ENCODE measurements at regions of chr1 and their contacts with region 1.

Region 1: DNA sequence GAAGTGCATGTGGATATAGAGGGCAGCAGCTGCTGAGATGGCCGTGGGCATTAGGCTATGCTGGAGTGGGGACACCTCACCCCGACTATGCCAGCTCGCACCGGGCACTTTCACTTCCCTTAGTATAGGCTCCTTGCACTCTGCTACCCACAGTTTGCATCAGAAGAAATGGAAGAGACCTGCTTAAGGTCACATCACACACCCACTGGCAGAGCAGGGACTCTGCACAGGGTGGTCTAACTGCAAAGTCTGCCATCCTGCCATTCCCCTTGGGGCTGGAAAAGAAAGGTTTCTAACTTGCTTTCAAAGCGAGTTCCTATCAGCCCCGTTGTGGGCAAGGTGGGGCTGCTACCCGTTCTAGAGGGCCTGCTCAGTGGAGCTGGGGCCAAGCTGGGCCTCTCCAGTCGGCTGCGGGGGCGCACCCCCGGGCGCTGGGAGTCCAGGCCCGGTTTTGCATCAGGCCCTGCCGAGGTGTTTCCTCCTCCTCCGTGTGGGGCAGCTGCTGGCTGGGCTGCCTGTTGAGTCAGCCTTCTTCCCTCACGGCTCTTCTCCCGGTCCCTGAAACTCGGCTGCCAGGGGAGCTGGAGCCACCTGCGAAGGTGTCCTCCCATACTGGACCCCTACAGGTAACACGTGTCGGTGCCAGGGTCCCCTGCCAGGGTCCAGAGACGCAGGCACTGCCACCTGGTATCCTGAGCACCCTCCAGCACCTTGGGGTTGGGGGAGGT is at the start of gene SYTL1:
- DNase-seq: peak; percentile 68 to 88 (median 82)
- H3K4me3 ChIP-seq: peak within 1 kb of the TSS; percentile 56 to 93 (median 83)
- H3K27ac ChIP-seq: peak within 1 kb of the TSS; percentile 50 to 84
- H3K4me1 ChIP-seq: peaks cover 3 to 56% (median 36%) of the 10 kb centered on the region in 4 experiments
- H3K27me3 ChIP-seq: no peaks in the 10 kb centered on the region

Region 2: DNA sequence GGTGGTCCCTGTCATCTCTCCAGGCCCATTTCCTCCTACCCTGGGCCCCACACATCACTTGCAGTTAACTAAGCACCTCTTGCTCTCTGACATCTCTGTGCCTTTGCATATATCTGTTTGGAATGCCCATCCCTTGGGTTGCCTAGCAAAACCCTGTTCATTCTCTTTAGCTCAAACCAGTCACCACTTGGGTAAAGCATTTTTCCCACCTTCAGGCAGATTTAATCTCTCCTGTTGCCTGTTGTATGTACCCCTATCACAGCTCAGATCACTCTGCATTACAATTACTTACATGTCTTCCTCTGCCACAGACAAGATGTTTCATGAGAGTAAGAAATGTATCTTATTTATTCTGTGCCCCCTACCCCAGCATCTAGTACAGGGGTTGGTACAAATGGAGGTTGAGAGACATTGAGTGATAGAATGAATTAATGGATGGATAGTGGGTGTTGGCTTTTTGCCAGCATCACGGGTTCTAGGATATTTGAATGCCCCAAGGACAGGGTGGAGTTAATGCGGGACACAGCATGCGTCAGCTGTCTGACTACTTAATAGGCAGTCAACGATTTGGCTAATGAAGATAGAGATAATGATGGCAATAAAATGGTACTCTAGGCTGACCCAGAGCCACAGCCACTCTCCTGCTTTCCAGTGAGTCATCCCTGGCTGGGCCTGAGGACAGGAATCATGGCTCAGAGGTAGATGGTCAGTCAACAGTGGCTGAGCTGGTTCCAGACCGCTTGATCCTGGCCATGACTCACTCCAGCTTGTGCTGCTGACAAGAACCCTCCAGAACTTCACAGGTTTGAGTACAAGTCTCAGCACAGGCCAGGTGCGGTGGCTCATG is 434.4 kb before region 1 on chr1:
- CTCF ChIA-PET with region 1: no interaction called
- POLR2A ChIA-PET with region 1: no interaction called
- DNase-seq: no peak
- H3K4me3 ChIP-seq: no peak overlapping the region
- H3K27ac ChIP-seq: no peak overlapping the region
- H3K4me1 ChIP-seq: no peaks in the 10 kb centered on the region
- H3K27me3 ChIP-seq: no peaks in the 10 kb centered on the region

Region 3: GRCh38 chr1:27314169-27314568 is 27.5 kb before region 1 on chr1:
- CTCF ChIA-PET with region 1: no interaction called
- POLR2A ChIA-PET with region 1: no interaction called
- DNase-seq: peak in 2 of 3 donors; percentile 30 to 33
- H3K4me3 ChIP-seq: no peak overlapping the region
- H3K27ac ChIP-seq: no peak overlapping the region
- H3K4me1 ChIP-seq: no peaks in the 10 kb centered on the region
- H3K27me3 ChIP-seq: peaks cover 0 to 3% (median 0%) of the 10 kb centered on the region in 5 experiments

Region 4: DNA sequence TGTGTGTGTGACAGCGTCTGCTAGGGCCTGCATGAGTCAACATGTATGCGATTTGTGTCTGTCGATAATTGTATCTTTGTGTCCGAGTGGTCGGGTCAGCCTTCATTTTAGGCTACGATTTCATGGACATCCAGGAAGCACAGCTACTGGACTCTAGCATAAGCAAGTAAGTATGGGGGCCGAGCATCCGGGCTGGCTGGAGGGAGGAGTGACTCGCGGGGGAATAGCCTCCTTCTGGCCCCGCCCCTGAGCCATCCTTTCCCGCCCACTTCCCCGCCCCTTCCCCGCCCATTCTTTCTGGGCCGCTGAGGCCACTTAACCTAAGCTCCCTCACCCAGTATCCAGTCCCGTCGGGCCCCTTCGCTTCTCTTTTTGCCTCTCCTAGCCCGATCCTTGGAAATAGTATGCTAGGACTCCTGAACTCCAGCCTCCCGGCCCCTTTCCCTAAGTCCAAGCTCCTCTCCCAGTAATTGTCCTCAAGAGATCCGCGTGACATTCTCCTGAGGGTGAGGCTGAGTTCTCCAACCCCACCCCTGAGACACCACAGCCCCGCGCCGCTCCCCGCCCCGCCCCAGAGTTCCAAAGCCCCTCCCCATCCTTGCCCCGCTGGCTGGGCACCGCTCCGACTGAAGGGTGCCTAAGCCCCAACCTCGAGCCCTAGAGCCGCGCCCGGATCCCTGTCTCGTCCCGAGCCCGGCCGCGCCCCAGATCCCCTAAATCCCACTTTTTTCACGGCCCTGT is 23.9 kb after region 1 on chr1:
- CTCF ChIA-PET with region 1: interaction called, 102 read pairs
- POLR2A ChIA-PET with region 1: no interaction called
- DNase-seq: peak; percentile 69 to 79 (median 77)
- H3K4me3 ChIP-seq: peak overlapping the region; percentile 37 to 83 (median 70)
- H3K27ac ChIP-seq: peak overlapping the region in 1 of 2 experiments; percentile 54
- H3K4me1 ChIP-seq: peaks cover 9 to 59% (median 52%) of the 10 kb centered on the region in 4 experiments
- H3K27me3 ChIP-seq: no peaks in the 10 kb centered on the region